ENCODE measurements at regions of chr9 and their contacts with region 1.

Region 1: DNA sequence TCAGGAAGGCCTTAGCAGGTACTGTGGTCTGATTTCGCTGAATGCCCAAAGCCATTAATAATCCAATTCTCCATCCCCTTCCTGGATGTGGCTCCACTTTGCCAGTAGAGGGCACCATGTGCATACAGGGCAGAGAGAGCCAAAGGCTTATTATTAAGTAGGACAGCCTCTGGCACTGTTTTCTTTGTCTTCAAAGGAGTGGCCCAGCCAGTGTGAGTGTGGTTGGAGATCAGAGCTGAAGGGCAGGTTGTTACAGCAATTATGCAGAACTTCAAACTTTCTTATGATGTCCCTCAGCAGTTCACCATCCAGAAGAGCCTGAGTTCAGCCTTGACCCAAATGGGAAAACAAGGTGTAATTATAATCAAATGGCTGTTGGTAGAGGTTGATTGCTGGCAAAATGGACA is 38.6 kb upstream of the CEMIP2 start:
- DNase-seq: peak; percentile 18 to 57 (median 30)
- ATAC-seq: peak; percentile 94
- H3K4me3 ChIP-seq: no peak overlapping the region
- H3K27ac ChIP-seq: no peak overlapping the region
- H3K4me1 ChIP-seq: no peaks in the 10 kb centered on the region
- H3K27me3 ChIP-seq: no peaks in the 10 kb centered on the region; a peak in 1 of 5 replicates
- CTCF ChIP-seq: peak; percentile 76 to 88 (median 78)
- EP300 ChIP-seq: no peak
- POLR2A ChIP-seq: no peak
- RAD21 ChIP-seq: peak; percentile 76 to 87

Region 2: DNA sequence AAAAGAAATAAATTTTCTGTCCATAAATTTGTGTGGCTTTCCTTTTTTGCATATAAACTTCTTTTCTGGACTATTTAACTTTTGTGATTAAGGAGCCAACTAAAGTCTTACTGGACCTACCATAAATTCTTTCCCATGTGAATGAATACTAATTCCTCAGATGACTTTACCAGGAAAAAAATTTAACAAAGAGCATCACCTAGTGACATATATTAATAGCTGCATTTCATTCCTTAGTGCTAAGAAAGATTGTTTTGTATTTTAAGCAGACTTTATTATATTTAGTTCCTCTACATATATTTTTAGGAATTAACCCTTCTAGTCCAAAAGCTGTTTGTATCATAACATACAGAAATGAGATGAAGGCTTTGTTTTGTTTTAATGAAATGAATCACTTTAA is 168.9 kb after region 1 on chr9:
- CTCF ChIA-PET with region 1: interaction called, 5 read pairs
- POLR2A ChIA-PET with region 1: interaction called, 3 read pairs
- in situ Hi-C with region 1: no loop called
- intact Hi-C with region 1: loop called (anchors 2 kb)
- DNase-seq: no peak
- ATAC-seq: no peak
- H3K4me3 ChIP-seq: no peak overlapping the region
- H3K27ac ChIP-seq: no peak overlapping the region
- H3K4me1 ChIP-seq: no peaks in the 10 kb centered on the region
- H3K27me3 ChIP-seq: no peaks in the 10 kb centered on the region
- CTCF ChIP-seq: peak in 1 of 3 experiments; percentile 47; a peak in 2 of 6 replicates
- EP300 ChIP-seq: no peak
- POLR2A ChIP-seq: no peak
- RAD21 ChIP-seq: peak in 1 of 2 experiments; percentile 32; a peak in 2 of 4 replicates

Region 3: GRCh38 chr9:72022841-72023240 is 215.9 kb after region 1 on chr9:
- CTCF ChIA-PET with region 1: interaction called, 7 read pairs
- POLR2A ChIA-PET with region 1: no interaction called
- in situ Hi-C with region 1: no loop called
- intact Hi-C with region 1: loop called (anchors 1 kb)
- DNase-seq: no peak
- ATAC-seq: no peak
- H3K4me3 ChIP-seq: no peak overlapping the region
- H3K27ac ChIP-seq: no peak overlapping the region
- H3K4me1 ChIP-seq: no peaks in the 10 kb centered on the region
- H3K27me3 ChIP-seq: no peaks in the 10 kb centered on the region; a peak in 2 of 5 replicates
- CTCF ChIP-seq: no peak
- EP300 ChIP-seq: no peak
- POLR2A ChIP-seq: no peak
- RAD21 ChIP-seq: no peak

Region 4: GRCh38 chr9:72038890-72039410 is 232.0 kb after region 1 on chr9:
- CTCF ChIA-PET with region 1: no interaction called
- POLR2A ChIA-PET with region 1: no interaction called
- in situ Hi-C with region 1: loop called (anchors 10 kb)
- intact Hi-C with region 1: no loop called
- DNase-seq: peak; percentile 59 to 73 (median 69)
- ATAC-seq: peak; percentile 93
- H3K4me3 ChIP-seq: no peak overlapping the region
- H3K27ac ChIP-seq: no peak overlapping the region
- H3K4me1 ChIP-seq: no peaks in the 10 kb centered on the region
- H3K27me3 ChIP-seq: peaks cover 0 to 14% of the 10 kb centered on the region in 2 experiments; a peak in 4 of 5 replicates
- CTCF ChIP-seq: peak; percentile 79 to 87 (median 86)
- EP300 ChIP-seq: no peak
- POLR2A ChIP-seq: no peak
- RAD21 ChIP-seq: peak; percentile 89 to 93

Measured in K562 (cell line).